IMR-90 (cell line): ENCODE measurements at regions of chr3 and their contacts with region 1.

Region 1: DNA sequence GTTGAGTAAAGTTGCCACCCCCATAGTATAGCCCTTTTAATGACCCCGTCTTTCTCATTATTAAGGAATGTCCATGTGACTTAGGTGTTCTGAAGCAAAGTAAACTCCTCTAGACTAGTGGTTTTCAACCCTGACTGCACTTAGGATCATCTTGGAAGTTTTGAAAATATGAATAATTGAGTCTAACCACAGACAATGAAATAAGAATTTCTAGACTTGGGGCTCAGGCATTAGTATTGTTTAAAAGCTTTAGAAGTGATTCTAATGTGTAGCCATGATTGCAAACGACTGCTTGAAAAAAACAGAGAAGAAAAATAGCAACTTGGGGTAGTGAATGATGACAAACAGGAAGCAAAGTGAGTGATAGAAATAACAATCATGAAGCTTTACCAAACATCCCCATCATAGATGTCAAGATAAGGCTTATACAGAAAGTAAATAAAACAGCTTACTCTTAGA is 35.0 kb downstream of the ALCAM start:
- DNase-seq: peak; percentile 37
- ATAC-seq: peak; percentile 24; the same call in 1 of the 2 replicates
- H3K4me3 ChIP-seq: no peak overlapping the region
- H3K27ac ChIP-seq: no peak overlapping the region
- H3K4me1 ChIP-seq: peaks cover 5% of the 10 kb centered on the region
- H3K27me3 ChIP-seq: no peaks in the 10 kb centered on the region
- CTCF ChIP-seq: no peak
- POLR2A ChIP-seq: no peak
- RAD21 ChIP-seq: no peak

Region 2: DNA sequence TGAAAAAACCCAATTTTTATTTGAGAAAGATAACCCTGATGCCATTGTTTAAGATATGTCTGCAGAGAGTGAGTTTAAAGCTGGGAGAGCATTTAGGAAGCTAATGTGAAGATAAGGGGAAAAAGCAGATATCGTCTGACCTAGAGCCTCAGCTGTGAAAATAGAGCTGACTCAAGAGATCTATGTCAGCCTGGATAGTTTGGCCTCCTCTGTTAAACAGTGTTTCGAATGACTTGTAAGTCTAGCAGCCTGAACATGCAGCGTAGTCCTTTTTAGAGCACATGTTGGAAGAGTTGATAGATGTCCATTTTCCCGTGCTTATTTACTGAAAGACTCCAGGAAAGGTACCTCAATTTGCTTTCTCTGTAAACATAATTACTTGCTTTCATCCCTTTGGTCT is 13.1 kb after region 1 on chr3:
- CTCF ChIA-PET with region 1: interaction called, 3 read pairs
- POLR2A ChIA-PET with region 1: no interaction called
- dilution Hi-C with region 1: no loop called
- in situ Hi-C with region 1: no loop called
- intact Hi-C with region 1: loop called (anchors 2 kb)
- DNase-seq: peak; percentile 82
- ATAC-seq: peak; percentile 80
- H3K4me3 ChIP-seq: no peak overlapping the region
- H3K27ac ChIP-seq: no peak overlapping the region
- H3K4me1 ChIP-seq: peaks cover 2% of the 10 kb centered on the region; the same call in 1 of the 2 replicates
- H3K27me3 ChIP-seq: no peaks in the 10 kb centered on the region
- CTCF ChIP-seq: no peak
- POLR2A ChIP-seq: no peak
- RAD21 ChIP-seq: no peak